CD4-positive, alpha-beta T cell (primary cell): ENCODE measurements at regions of chr22 and their contacts with region 1.

Region 1: GRCh38 chr22:19717691-19718455 is 3.6 kb downstream of the SEPTIN5 start:
- DNase-seq: peak; percentile 68 to 91 (median 78)
- ATAC-seq: peak; percentile 95
- H3K4me3 ChIP-seq: peak overlapping the region; percentile 31
- H3K4me3 Mint-ChIP-seq: peak overlapping the region; percentile 82
- H3K27ac ChIP-seq: no peak overlapping the region
- H3K27ac Mint-ChIP-seq: no peak overlapping the region
- H3K4me1 ChIP-seq: peaks cover 35% of the 10 kb centered on the region
- H3K4me1 Mint-ChIP-seq: peaks cover 10% of the 10 kb centered on the region
- H3K27me3 ChIP-seq: peaks cover 58 to 63% of the 10 kb centered on the region in 2 experiments
- H3K27me3 Mint-ChIP-seq: peaks cover 45% of the 10 kb centered on the region
- CTCF ChIP-seq: peak; percentile 96

Region 2: GRCh38 chr22:19495562-19496323 is 222.1 kb before region 1 on chr22:
- CTCF ChIA-PET with region 1: no interaction called
- POLR2A ChIA-PET with region 1: no interaction called
- intact Hi-C with region 1: loop called (anchors 5 to 10 kb)
- DNase-seq: peak in 4 of 14 experiments; percentile 5 to 64 (median 52)
- ATAC-seq: peak; percentile 70
- H3K4me3 ChIP-seq: no peak overlapping the region
- H3K4me3 Mint-ChIP-seq: no peak overlapping the region
- H3K27ac ChIP-seq: no peak overlapping the region
- H3K27ac Mint-ChIP-seq: peak overlapping the region; percentile 47
- H3K4me1 ChIP-seq: no peaks in the 10 kb centered on the region
- H3K4me1 Mint-ChIP-seq: peaks cover 9% of the 10 kb centered on the region
- H3K27me3 ChIP-seq: no peaks in the 10 kb centered on the region
- H3K27me3 Mint-ChIP-seq: no peaks in the 10 kb centered on the region
- CTCF ChIP-seq: peak; percentile 39

Region 3: GRCh38 chr22:19679522-19680101 is 38.3 kb before region 1 on chr22:
- CTCF ChIA-PET with region 1: no interaction called
- POLR2A ChIA-PET with region 1: no interaction called
- intact Hi-C with region 1: loop called (anchors 1 kb)
- DNase-seq: peak; percentile 17 to 67 (median 42)
- ATAC-seq: no peak
- H3K4me3 ChIP-seq: no peak overlapping the region
- H3K4me3 Mint-ChIP-seq: no peak overlapping the region
- H3K27ac ChIP-seq: no peak overlapping the region
- H3K27ac Mint-ChIP-seq: no peak overlapping the region
- H3K4me1 ChIP-seq: no peaks in the 10 kb centered on the region
- H3K4me1 Mint-ChIP-seq: no peaks in the 10 kb centered on the region
- H3K27me3 ChIP-seq: peaks cover 22 to 23% of the 10 kb centered on the region in 2 experiments
- H3K27me3 Mint-ChIP-seq: peaks cover 45% of the 10 kb centered on the region
- CTCF ChIP-seq: peak; percentile 89